ENCODE measurements at regions of chr4 and their contacts with region 1.

Region 1: GRCh38 chr4:40301603-40302002 is 33.5 kb upstream of the CHRNA9 start:
- DNase-seq: peak; percentile 49 to 93 (median 78)
- ATAC-seq: peak; percentile 83 to 89
- H3K4me3 Mint-ChIP-seq: peak overlapping the region; percentile 31 to 84 (median 74)
- H3K27ac Mint-ChIP-seq: peak overlapping the region; percentile 82 to 100 (median 98)
- H3K4me1 Mint-ChIP-seq: peaks cover 43 to 90% (median 84%) of the 10 kb centered on the region in 4 donors
- H3K27me3 Mint-ChIP-seq: no peaks in the 10 kb centered on the region

Region 2: GRCh38 chr4:40193016-40193571 is 108.5 kb before region 1 on chr4:
- POLR2A ChIA-PET with region 1: interaction called, 68 read pairs
- DNase-seq: peak in 6 of 10 donors; percentile 51 to 79 (median 74)
- ATAC-seq: peak; percentile 24 to 26
- H3K4me3 Mint-ChIP-seq: peak overlapping the region; percentile 86 to 100 (median 98)
- H3K27ac Mint-ChIP-seq: peak overlapping the region; percentile 94 to 100 (median 99)
- H3K4me1 Mint-ChIP-seq: peaks cover 36 to 83% (median 76%) of the 10 kb centered on the region in 4 donors
- H3K27me3 Mint-ChIP-seq: peaks cover 0 to 1% (median 0%) of the 10 kb centered on the region in 5 donors

Region 3: GRCh38 chr4:40255393-40256281 is 46.0 kb before region 1 on chr4:
- POLR2A ChIA-PET with region 1: interaction called, 15 read pairs
- DNase-seq: no peak
- ATAC-seq: peak; percentile 22 to 27
- H3K4me3 Mint-ChIP-seq: peak overlapping the region; percentile 16 to 78 (median 62)
- H3K27ac Mint-ChIP-seq: peak overlapping the region; percentile 84 to 97 (median 94)
- H3K4me1 Mint-ChIP-seq: peaks cover 39 to 77% (median 70%) of the 10 kb centered on the region in 4 donors
- H3K27me3 Mint-ChIP-seq: no peaks in the 10 kb centered on the region

Region 4: GRCh38 chr4:40283968-40284367 is 17.6 kb before region 1 on chr4:
- POLR2A ChIA-PET with region 1: interaction called, 52 read pairs
- DNase-seq: peak; percentile 35 to 89 (median 74)
- ATAC-seq: peak; percentile 89 to 98
- H3K4me3 Mint-ChIP-seq: peak overlapping the region; percentile 29 to 77 (median 68)
- H3K27ac Mint-ChIP-seq: peak overlapping the region; percentile 88 to 98 (median 94)
- H3K4me1 Mint-ChIP-seq: peaks cover 33 to 84% (median 80%) of the 10 kb centered on the region in 4 donors
- H3K27me3 Mint-ChIP-seq: no peaks in the 10 kb centered on the region

Region 5: GRCh38 chr4:40316782-40317635 is 15.4 kb after region 1 on chr4:
- POLR2A ChIA-PET with region 1: interaction called, 15 read pairs
- DNase-seq: peak in 9 of 10 donors; percentile 49 to 82 (median 71)
- ATAC-seq: peak; percentile 71 to 76
- H3K4me3 Mint-ChIP-seq: peak overlapping the region; percentile 81 to 91 (median 83)
- H3K27ac Mint-ChIP-seq: peak overlapping the region; percentile 90 to 98 (median 96)
- H3K4me1 Mint-ChIP-seq: peaks cover 27 to 49% (median 47%) of the 10 kb centered on the region in 4 donors
- H3K27me3 Mint-ChIP-seq: no peaks in the 10 kb centered on the region

Region 6: DNA sequence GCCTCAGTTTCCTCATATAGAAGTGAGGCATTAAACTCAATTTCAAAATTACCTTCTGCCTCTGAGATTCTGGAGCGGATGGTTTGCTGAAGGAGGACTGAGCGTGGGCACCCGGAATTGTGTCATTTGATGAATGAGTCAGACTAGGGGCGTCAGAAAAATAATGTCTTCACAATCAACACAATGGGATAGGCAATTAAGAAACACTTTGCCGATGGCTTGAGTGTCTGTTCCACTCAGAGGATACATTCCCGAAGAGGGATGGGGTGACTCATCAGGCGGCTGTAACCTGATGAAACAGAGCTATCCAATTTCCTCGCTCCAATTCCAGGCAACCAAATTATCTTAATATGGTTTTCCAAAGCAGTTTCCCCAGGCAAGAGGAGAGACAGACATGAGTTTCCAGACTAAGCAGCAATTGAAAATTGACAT is 32.3 kb after region 1 on chr4:
- POLR2A ChIA-PET with region 1: no interaction called
- DNase-seq: no peak
- ATAC-seq: no peak
- H3K4me3 Mint-ChIP-seq: no peak overlapping the region
- H3K27ac Mint-ChIP-seq: no peak overlapping the region
- H3K4me1 Mint-ChIP-seq: no peaks in the 10 kb centered on the region
- H3K27me3 Mint-ChIP-seq: peaks cover 0 to 4% (median 0%) of the 10 kb centered on the region in 5 donors

Region 7: DNA sequence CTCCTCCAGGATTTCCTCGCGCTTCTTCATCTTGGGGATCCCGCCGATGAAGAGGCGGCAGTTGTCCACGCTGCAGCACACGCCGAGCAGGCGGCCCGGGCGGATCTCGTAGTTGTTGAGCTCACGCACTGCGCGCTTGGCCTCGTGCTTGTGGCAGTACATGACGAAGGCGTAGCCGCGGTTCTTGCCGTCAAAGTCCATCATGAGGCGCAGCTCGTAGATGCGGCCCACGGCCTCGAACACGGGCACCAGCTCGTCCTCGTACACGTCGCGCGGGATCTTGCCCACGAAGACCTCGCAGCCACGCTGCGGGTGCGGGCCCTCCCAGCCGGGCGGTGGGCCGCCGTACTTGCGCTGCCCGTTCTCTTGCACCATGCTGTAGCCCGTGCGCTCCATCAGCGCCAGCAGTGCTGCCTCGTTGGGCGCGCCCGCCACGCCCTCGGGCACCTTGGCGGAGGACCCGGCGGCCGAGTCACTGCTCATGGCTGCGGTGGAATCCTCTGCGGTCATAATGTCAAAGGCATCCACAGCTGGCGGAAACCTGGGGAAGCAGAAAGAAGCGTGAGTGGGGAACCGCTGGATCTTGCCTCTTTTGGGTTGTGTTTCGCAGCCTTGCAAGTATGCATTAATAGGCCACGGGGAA is 136.9 kb after region 1 on chr4:
- POLR2A ChIA-PET with region 1: no interaction called
- DNase-seq: no peak
- ATAC-seq: no peak
- H3K4me3 Mint-ChIP-seq: peak overlapping the region in 5 of 10 donors; percentile 14 to 34 (median 26)
- H3K27ac Mint-ChIP-seq: peak overlapping the region in 4 of 10 donors; percentile 6 to 43 (median 28)
- H3K4me1 Mint-ChIP-seq: peaks cover 6 to 23% (median 21%) of the 10 kb centered on the region in 4 donors
- H3K27me3 Mint-ChIP-seq: no peaks in the 10 kb centered on the region

Region 8: DNA sequence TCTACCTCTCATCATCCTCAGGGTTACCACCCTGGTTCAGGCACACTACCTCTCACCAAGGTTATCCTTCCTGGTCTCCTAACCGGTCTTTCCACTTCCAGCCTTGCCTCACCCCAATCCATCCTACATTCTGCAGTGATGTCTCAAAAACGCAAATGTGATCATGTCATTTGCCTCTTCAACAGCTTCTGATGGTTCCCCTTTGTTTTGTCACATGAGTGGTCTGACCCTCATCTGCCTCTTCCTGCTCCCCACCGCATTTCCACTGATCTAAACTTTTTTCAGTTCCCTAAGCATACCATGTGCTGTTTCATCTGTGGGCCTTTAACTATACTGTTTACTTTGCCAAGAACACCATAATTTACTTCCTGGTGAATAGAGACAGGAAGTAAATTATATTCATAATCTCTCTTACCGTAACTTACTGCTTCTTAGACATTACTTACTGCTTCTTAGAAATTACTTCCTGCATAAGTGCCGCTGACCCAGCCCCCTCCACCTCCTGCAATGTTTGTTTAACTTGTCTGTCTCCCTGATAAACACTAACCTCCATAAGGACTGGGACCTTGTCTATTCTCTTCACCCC is 421.1 kb after region 1 on chr4:
- POLR2A ChIA-PET with region 1: no interaction called
- DNase-seq: peak in 5 of 10 donors; percentile 4 to 81 (median 36)
- ATAC-seq: peak; percentile 90 to 97
- H3K4me3 Mint-ChIP-seq: no peak overlapping the region
- H3K27ac Mint-ChIP-seq: no peak overlapping the region
- H3K4me1 Mint-ChIP-seq: peaks cover 0 to 6% (median 1%) of the 10 kb centered on the region in 4 donors
- H3K27me3 Mint-ChIP-seq: no peaks in the 10 kb centered on the region

Measured in naive thymus-derived CD8-positive, alpha-beta T cell (primary cell).